ENCODE measurements at regions of chr10 and their contacts with region 1.

Region 1: DNA sequence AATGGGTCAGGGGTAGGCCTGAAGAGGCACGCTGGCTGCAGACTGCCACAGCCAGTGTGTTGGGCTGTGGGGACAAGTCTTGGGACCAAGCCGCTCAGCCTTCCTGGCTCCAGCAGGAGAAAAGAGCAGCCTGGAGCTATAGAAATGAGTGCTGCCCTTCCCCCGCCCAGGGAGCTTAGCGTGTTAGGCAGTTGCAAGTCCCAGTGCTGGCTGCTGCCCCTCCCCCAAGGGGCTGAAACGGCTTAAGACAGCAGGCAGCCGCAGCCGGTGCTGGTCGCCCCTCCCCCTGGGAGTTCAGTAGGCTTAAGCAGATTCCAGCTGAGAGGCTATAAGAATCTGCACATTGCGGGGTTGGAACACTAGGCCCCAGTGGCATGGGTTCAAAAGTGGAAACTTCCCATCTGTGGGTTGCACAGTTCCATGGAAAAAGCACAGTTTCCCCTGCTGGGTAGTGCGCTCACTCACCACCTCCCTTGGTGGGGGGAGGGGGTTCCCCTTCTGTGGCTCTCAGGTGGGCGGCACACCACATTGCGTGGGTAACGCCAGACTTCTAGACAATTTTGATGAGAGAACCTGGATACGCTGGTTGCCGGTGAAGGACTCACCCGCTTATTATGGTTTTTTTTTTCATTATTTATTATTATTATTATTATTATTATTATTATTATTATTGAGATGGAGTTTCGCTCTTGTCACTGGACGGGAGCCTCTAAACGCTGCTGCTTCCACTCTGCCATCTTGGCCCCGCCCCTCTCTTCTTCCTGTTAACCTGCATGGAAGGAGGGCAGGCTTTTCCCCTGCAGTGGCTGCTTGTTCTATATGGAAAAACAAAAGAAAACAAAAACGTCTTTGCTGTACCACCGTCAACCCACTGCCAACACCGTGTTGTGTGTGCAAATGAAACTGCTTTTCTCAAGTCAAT is 151.1 kb downstream of the CXCL12 start:
- DNase-seq: no peak
- ATAC-seq: no peak
- H3K4me3 ChIP-seq: no peak overlapping the region
- H3K27ac ChIP-seq: no peak overlapping the region
- H3K4me1 ChIP-seq: peaks cover 68% of the 10 kb centered on the region
- H3K27me3 ChIP-seq: no peaks in the 10 kb centered on the region
- CTCF ChIP-seq: no peak
- EP300 ChIP-seq: no peak
- POLR2A ChIP-seq: no peak
- RAD21 ChIP-seq: no peak

Region 2: GRCh38 chr10:44195112-44196007 is 38.5 kb before region 1 on chr10:
- CTCF ChIA-PET with region 1: no interaction called
- POLR2A ChIA-PET with region 1: interaction called, 11 read pairs
- in situ Hi-C with region 1: no loop called
- intact Hi-C with region 1: loop called (anchors 2 kb)
- DNase-seq: peak; percentile 89
- ATAC-seq: peak; percentile 93
- H3K4me3 ChIP-seq: peak overlapping the region; percentile 9 to 59 (median 14); a peak in 2 of 6 replicates
- H3K27ac ChIP-seq: peak overlapping the region; percentile 76
- H3K4me1 ChIP-seq: peaks cover 83% of the 10 kb centered on the region
- H3K27me3 ChIP-seq: no peaks in the 10 kb centered on the region
- CTCF ChIP-seq: no peak
- EP300 ChIP-seq: peak in 1 of 2 experiments; percentile 86; a peak in 1 of 4 replicates
- POLR2A ChIP-seq: no peak
- RAD21 ChIP-seq: no peak

Region 3: DNA sequence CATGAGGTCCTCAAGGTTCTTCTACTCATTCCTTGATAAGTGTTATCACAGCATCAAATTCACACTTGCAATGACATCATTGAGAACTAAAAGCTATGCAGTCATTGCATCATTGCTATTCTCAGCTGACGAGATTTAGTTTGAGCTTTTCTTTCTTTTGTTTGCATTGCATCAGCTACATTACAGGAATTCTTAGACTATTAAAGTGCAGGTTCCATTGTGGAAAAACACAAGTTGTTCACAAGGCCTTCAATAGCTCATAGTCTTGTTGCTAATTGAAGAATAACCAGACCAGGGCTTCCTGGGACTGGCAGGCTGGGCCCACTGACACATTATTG is 11.7 kb after region 1 on chr10:
- CTCF ChIA-PET with region 1: no interaction called
- POLR2A ChIA-PET with region 1: interaction called, 32 read pairs
- in situ Hi-C with region 1: no loop called
- intact Hi-C with region 1: loop called (anchors 1 kb)
- DNase-seq: peak; percentile 90
- ATAC-seq: peak; percentile 63
- H3K4me3 ChIP-seq: peak overlapping the region in 1 of 3 experiments; percentile 12; a peak in 1 of 6 replicates
- H3K27ac ChIP-seq: peak overlapping the region; percentile 83
- H3K4me1 ChIP-seq: peaks cover 74% of the 10 kb centered on the region
- H3K27me3 ChIP-seq: no peaks in the 10 kb centered on the region
- CTCF ChIP-seq: no peak
- EP300 ChIP-seq: peak; percentile 60 to 91; a peak in 2 of 4 replicates
- POLR2A ChIP-seq: no peak
- RAD21 ChIP-seq: no peak

Region 4: GRCh38 chr10:44253769-44254462 is 20.1 kb after region 1 on chr10:
- CTCF ChIA-PET with region 1: no interaction called
- POLR2A ChIA-PET with region 1: interaction called, 14 read pairs
- in situ Hi-C with region 1: no loop called
- intact Hi-C with region 1: loop called (anchors 1 kb)
- DNase-seq: peak; percentile 49
- ATAC-seq: no peak
- H3K4me3 ChIP-seq: no peak overlapping the region
- H3K27ac ChIP-seq: peak overlapping the region; percentile 3
- H3K4me1 ChIP-seq: peaks cover 68% of the 10 kb centered on the region
- H3K27me3 ChIP-seq: no peaks in the 10 kb centered on the region
- CTCF ChIP-seq: no peak
- EP300 ChIP-seq: peak in 1 of 2 experiments; percentile 17; a peak in 1 of 4 replicates
- POLR2A ChIP-seq: no peak
- RAD21 ChIP-seq: no peak

Region 5: DNA sequence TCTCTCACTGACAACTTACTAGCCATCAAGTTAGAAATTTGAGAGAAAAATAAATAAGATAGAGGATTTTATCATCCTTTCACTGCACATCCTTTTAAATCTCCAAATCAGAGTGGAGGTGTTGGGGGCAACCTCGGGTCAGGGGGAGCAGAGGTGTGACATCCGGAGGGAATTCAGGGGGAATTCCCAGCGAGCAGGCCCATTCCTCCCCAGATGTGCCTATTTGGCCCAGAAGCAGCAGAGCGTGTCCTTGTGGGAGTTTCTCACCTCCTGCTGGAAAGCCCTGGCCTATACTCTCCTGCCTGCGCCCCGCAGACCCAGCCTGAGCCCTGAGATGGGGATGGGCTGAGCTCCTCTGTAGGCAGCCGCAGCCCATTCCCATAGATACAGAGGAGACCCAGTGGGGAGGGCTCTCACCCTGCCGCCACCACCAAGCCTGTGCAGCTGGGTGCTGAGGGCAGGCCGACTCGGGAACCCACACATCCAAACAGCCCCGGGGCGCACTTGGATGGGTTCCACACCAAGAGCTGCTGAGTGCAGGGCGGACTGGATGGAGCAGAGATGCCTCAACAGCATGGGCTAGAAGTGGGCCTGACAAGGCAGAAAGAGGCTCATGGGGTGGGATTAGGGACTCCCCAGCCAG is 26.6 kb after region 1 on chr10:
- CTCF ChIA-PET with region 1: no interaction called
- POLR2A ChIA-PET with region 1: interaction called, 14 read pairs
- in situ Hi-C with region 1: no loop called
- intact Hi-C with region 1: loop called (anchors 1 kb)
- DNase-seq: no peak
- ATAC-seq: no peak
- H3K4me3 ChIP-seq: no peak overlapping the region
- H3K27ac ChIP-seq: peak overlapping the region; percentile 98
- H3K4me1 ChIP-seq: peaks cover 65% of the 10 kb centered on the region
- H3K27me3 ChIP-seq: no peaks in the 10 kb centered on the region
- CTCF ChIP-seq: no peak
- EP300 ChIP-seq: no peak
- POLR2A ChIP-seq: no peak
- RAD21 ChIP-seq: no peak